BJ (cell line): ENCODE measurements at regions of chr19 and their contacts with region 1.

Region 1: DNA sequence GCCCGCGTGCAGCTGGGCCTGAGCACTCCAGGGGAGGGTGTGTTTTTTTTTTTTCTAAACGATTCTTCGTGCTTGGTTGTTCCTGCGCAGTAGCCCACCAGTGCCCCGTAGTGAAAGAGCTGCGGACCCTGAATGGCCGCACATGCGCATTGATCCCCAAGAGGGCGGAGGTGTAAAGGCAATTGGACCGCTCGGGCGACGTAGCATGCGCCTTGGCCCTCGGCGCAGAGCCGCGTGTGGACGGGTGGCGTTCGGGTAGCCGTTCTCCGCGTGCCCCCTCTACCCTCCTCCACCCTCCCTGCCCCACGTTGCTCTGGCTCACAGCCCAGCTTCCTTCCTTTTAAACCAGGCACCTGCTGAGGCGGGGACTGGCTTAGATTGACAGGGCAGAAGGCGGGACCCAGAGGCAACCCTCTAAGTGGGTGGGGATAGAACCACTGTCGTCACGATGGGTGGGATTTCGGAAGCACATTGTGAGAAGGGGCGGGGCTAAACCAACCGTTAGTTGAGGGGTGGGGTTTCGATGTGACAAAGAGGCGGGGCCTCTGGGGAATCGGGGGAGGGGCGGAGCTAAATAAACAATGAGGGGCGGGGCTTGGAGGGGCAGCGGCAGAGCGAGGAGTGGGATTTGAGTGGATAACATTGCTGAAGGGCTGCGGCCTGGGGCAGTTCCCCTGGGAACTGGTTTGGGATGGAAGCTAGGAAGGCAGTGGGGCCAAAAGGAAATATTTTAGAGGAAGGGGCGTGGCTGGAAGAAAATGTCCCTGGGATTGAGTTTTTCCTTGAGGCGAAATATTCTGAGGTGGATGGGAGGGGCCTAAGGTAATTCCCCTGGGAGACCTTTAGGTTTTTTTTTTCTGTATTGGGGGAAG is 543 bp upstream of the NUP62 start:
- DNase-seq: peak; percentile 73
- H3K4me3 ChIP-seq: peak overlapping the region; percentile 98
- H3K27me3 ChIP-seq: no peaks in the 10 kb centered on the region
- CTCF ChIP-seq: no peak

Region 2: GRCh38 chr19:49770529-49770928 is 159.3 kb before region 1 on chr19:
- CTCF ChIA-PET with region 1: no interaction called
- POLR2A ChIA-PET with region 1: interaction called, 35 read pairs
- DNase-seq: no peak
- H3K4me3 ChIP-seq: no peak overlapping the region
- H3K27me3 ChIP-seq: no peaks in the 10 kb centered on the region
- CTCF ChIP-seq: no peak

Region 3: DNA sequence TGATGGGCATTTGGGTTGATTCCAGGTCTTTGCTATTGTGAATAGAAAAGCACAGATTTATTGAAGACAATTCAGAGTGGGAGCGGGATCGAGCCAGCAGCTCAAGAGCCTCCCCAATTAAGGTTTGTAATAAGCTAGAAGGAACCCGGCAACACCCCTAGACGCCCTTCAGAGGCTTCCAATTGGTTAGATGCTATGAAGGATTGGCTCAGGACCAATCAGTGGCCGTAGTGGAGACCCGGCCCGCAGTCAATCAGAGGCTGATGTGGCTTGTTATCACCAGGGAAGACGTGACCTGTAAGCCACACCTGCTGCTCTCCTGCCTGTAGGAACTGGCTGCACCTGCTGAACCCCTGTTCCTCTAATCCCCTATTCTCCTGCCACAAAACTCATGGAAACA is 16.6 kb after region 1 on chr19:
- CTCF ChIA-PET with region 1: no interaction called
- POLR2A ChIA-PET with region 1: no interaction called
- DNase-seq: no peak
- H3K4me3 ChIP-seq: no peak overlapping the region
- H3K27me3 ChIP-seq: peaks cover 2% of the 10 kb centered on the region; the same call in 1 of the 2 replicates
- CTCF ChIP-seq: no peak